Posterior cingulate gyrus (tissue), 11 donors: ENCODE measurements at regions of chr1 and their contacts with region 1.

Region 1: DNA sequence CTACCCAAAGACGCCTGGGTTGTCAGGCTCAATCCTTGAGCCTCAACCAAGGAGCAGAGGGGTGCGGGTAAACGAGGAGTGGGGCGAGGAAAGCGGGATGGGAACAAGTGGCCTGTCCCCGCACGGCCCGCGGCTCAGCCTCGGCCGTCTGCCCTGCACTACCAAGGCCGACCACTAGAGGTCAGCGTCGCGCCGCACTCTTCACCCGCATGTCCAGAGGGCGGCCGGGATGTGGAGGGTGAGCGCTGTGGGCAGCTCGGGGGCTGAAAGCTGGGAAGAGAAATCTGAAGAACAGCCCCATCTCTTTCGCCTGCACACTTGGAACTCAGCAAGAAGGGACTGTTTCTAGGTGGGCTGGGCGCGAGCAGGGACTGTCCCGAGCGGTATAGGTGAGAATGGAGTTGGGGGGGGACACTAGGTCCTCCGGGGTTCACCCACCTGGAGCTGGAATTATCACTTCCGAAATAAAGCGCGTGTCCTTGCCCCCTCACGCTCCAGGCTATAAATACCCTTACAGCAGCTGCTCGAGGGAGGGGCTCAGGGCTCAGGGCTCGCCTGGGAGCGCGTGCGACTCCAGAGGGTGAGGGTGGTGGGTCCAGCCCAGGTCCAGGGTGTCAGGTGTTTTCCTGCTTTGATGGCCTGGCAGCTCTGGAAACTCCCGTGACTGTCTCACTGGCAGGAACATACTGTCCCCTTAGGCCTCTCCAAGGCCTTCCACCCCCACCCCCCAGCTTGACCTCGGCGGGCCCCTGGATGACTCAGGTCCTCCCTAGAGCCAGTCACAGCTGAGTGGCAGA is 9.8 kb downstream of the SLC30A2 start:
- DNase-seq: peak; percentile 70 to 98 (median 86)

Region 2: GRCh38 chr1:26102526-26102925 is 66.4 kb after region 1 on chr1:
- intact Hi-C with region 1: loop called (anchors 5 kb)
- DNase-seq: no peak

Region 3: GRCh38 chr1:26145041-26145959 is 109.1 kb after region 1 on chr1:
- intact Hi-C with region 1: loop called (anchors 1 kb)
- DNase-seq: peak; percentile 52 to 96 (median 82)

Region 4: DNA sequence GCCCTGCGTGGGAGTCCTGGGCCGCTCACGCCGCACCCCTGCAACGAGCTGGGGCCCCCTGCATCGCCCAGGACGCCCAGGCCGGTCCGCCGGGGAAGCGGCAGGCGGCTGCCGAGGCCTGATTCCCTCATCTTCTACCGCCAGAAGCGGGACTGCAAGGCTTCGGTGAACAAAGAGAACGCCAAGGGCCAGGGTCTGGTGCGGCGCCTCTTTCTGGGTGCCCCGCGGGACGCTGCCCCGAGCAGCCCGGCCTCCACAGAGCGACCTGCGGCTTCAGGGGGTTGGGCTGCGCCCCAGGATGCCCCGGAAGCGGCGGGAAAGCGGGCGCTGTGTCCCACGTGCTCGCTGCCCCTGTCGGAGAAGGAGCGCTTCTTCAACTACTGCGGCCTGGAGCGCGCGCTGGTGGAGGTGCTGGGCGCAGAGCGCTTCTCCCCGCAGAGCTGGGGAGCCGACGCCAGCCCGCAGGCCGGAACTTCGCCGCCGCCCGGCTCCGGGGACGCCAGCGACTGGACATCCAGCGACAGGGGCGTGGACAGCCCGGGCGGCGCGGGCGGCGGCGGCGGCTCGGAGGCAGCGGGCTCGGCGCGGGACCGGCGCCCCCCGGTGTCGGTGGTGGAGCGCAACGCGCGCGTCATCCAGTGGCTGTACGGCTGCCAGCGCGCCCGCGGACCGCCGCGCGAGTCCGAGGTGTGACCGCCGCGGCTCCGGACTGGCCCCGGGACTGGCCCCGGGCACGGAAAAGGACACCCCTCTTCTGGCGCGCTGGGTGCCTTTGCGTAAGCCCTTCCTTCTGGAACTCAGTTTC is 125.5 kb after region 1 on chr1:
- intact Hi-C with region 1: loop called (anchors 5 kb)
- DNase-seq: peak; percentile 43 to 94 (median 58)